ENCODE measurements at regions of chr2 and their contacts with region 1.

Region 1: DNA sequence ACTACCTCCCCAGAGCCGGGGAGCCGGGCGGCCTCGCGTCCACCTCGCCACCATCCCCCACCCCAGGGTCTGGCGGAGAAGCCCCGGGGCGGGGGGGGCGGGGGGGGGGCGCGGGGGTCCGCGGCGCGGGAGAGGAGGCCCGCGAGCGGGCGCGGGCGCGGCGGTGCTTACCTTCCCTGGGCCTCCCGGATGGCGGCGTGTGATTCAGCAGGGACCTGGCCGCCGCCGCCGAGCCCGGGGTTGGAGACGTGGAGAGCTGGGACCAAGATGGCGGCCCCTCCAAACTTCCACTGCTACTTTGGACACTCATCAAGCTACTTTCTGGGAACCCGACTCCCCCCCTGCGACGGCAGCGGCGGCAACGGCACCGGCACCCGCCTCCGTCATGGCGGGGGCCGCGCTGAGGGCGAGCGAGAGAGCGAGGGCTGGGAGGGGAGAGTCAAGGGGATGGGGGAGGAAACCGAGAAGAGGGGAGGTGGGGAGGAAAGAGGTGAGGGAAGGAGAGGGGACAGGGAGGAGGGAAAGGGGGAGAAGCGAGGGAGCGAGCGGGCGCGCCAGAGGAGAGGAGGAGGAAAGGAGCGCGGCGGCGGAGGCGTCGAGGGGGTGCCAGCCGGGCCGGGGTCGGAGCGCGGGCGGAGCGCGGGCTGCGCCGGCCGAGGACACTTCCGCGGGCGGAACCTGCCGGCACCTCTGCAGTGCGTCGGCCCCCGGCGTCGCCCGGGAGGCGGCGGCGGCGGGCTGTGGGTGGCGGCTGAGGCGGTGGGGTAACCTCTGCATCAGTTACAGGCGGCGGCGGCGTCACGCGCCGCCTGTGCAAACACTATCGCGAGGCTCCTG is at the start of gene TLK1:
- DNase-seq: peak; percentile 91
- ATAC-seq: peak; percentile 72
- H3K4me3 ChIP-seq: peak within 1 kb of the TSS; percentile 80 to 91 (median 84)
- H3K4me3 Mint-ChIP-seq: peak within 1 kb of the TSS; percentile 98
- H3K27ac ChIP-seq: peak within 1 kb of the TSS; percentile 81 to 95
- H3K27ac Mint-ChIP-seq: peak within 1 kb of the TSS; percentile 95
- H3K4me1 ChIP-seq: peaks cover 35 to 44% of the 10 kb centered on the region in 2 donors
- H3K4me1 Mint-ChIP-seq: peaks cover 52% of the 10 kb centered on the region
- H3K27me3 ChIP-seq: no peaks in the 10 kb centered on the region
- H3K27me3 Mint-ChIP-seq: no peaks in the 10 kb centered on the region
- CTCF ChIP-seq: no peak
- total RNA-seq, gene TLK1: 178 and 186 TPM in 2 replicates

Region 2: GRCh38 chr2:170928824-170929685 is 231.3 kb before region 1 on chr2 and contains the start of gene GORASP2:
- CTCF ChIA-PET with region 1: interaction called, 7 read pairs
- POLR2A ChIA-PET with region 1: no interaction called
- intact Hi-C with region 1: loop called (anchors 1 kb)
- DNase-seq: peak; percentile 99
- ATAC-seq: peak; percentile 91
- H3K4me3 ChIP-seq: peak within 1 kb of the TSS; percentile 73 to 95 (median 89)
- H3K4me3 Mint-ChIP-seq: peak within 1 kb of the TSS; percentile 92
- H3K27ac ChIP-seq: peak within 1 kb of the TSS; percentile 75 to 90
- H3K27ac Mint-ChIP-seq: peak within 1 kb of the TSS; percentile 96
- H3K4me1 ChIP-seq: peaks cover 20 to 22% of the 10 kb centered on the region in 2 donors
- H3K4me1 Mint-ChIP-seq: peaks cover 34% of the 10 kb centered on the region
- H3K27me3 ChIP-seq: no peaks in the 10 kb centered on the region
- H3K27me3 Mint-ChIP-seq: no peaks in the 10 kb centered on the region
- CTCF ChIP-seq: peak; percentile 99
- total RNA-seq, gene GORASP2: 48.8 and 50.5 TPM in 2 replicates

Region 3: DNA sequence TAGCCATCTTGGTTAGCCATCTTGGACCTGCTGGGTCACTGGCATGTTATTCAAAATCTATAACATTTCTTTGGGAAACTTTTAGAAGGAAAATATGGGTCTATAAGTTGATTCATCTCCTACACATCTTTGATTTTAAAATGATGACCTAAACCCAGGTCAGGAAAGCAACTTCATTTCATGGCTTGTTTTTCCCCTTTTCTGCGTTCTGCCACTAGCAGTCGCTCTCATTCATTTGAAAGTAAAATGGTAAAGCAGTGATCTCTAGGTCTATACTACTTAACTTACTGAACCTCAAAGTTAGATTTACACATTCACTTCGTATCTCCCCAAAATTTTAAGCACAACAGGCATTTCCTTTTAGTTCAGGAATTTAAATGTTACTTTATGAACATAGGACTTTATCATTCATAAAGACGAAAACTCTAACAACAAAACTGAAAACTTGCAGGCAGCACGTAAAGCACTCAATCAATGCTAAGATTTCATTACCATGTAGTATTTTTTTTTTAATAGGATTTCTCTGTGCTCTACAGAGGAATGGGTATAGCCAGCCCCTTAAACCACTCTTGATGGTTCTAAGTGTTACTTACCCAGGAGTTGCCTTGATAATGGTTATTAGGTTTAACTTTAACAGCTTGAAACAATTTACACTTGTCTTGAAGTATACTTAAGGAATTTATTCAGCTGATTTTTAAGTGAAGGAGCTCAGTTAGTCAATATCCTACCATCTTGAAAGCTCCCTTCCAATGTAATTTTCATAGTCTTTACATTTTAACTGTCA is 168.7 kb before region 1 on chr2:
- CTCF ChIA-PET with region 1: no interaction called
- POLR2A ChIA-PET with region 1: no interaction called
- intact Hi-C with region 1: no loop called
- DNase-seq: no peak
- ATAC-seq: no peak
- H3K4me3 ChIP-seq: no peak overlapping the region
- H3K4me3 Mint-ChIP-seq: no peak overlapping the region
- H3K27ac ChIP-seq: no peak overlapping the region
- H3K27ac Mint-ChIP-seq: no peak overlapping the region
- H3K4me1 ChIP-seq: no peaks in the 10 kb centered on the region
- H3K4me1 Mint-ChIP-seq: no peaks in the 10 kb centered on the region
- H3K27me3 ChIP-seq: no peaks in the 10 kb centered on the region
- H3K27me3 Mint-ChIP-seq: no peaks in the 10 kb centered on the region
- CTCF ChIP-seq: no peak

Region 4: DNA sequence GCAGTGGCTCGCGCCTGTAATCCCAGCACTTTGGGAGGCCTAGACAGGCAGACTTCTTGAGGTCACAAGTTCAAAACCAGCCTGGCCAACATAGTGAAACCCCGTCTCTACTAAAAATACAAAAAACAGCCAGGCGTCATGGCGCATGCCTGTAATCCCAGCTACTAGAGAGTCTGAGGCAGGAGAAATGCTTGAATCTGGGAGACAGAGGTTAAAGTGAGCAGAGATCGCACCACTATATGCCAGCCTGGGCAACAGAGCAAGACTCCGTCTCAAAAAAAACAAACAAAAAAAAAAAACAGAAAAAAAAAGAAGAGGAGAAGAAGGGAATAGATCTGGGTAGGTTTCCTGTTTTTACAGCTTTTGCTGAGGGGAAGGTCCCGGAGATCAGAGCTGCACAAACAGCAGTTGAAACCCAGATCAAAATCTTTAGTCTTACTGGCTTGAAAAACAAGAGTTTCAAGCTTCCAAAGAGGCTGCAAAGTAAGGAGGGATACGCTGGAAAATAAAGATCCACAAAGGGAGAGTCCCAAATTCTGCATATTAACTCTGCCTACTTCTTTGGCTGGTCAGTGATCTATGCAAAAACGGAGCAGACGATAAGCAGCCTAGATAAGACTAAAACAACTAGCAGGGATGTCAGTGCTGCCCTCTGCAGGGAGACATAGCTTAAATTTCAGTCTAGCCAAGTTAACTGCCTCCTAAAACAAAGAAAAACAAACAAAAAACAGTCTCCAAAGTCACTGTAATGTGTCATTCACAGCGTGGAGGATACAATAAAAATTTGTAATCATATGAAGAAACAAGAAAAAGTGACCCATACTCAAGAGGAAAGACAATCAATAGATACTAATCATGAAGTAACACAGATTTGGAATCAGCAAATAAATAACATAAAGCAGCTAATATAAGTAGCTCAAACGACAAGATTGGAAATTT is 73.7 kb before region 1 on chr2:
- CTCF ChIA-PET with region 1: interaction called, 10 read pairs
- POLR2A ChIA-PET with region 1: no interaction called
- intact Hi-C with region 1: loop called (anchors 5 kb)
- DNase-seq: peak; percentile 57
- ATAC-seq: peak; percentile 63
- H3K4me3 ChIP-seq: no peak overlapping the region
- H3K4me3 Mint-ChIP-seq: no peak overlapping the region
- H3K27ac ChIP-seq: peak overlapping the region in 1 of 2 donors; percentile 1
- H3K27ac Mint-ChIP-seq: peak overlapping the region; percentile 17
- H3K4me1 ChIP-seq: peaks cover 3% of the 10 kb centered on the region in 2 donors
- H3K4me1 Mint-ChIP-seq: peaks cover 43% of the 10 kb centered on the region
- H3K27me3 ChIP-seq: no peaks in the 10 kb centered on the region
- H3K27me3 Mint-ChIP-seq: no peaks in the 10 kb centered on the region
- CTCF ChIP-seq: peak; percentile 66

Region 5: DNA sequence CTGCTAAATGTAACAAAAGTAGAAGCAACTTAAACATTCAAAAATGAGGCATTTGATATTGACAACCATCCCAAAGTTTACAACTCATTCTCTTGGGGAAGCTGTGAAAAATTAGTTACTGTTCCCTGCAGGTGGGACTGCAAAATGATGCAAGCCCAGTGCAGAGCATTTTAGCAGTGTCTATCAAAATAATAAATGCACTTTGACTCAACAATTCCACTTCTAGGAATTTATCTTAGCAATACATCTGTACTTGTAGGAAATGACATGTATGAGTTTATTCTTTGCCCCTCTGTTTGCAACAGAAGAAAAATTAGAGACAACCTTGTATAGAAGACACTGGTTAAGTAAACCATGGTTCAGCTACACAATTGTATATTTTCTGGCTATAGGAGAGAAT is 48.3 kb after region 1 on chr2:
- CTCF ChIA-PET with region 1: no interaction called
- POLR2A ChIA-PET with region 1: no interaction called
- intact Hi-C with region 1: loop called (anchors 5 kb)
- DNase-seq: no peak
- ATAC-seq: no peak
- H3K4me3 ChIP-seq: no peak overlapping the region
- H3K4me3 Mint-ChIP-seq: no peak overlapping the region
- H3K27ac ChIP-seq: no peak overlapping the region
- H3K27ac Mint-ChIP-seq: no peak overlapping the region
- H3K4me1 ChIP-seq: peaks cover 13 to 14% of the 10 kb centered on the region in 2 donors
- H3K4me1 Mint-ChIP-seq: peaks cover 20% of the 10 kb centered on the region
- H3K27me3 ChIP-seq: no peaks in the 10 kb centered on the region
- H3K27me3 Mint-ChIP-seq: no peaks in the 10 kb centered on the region
- CTCF ChIP-seq: no peak

Region 6: GRCh38 chr2:171342067-171342413 is 181.7 kb after region 1 on chr2:
- CTCF ChIA-PET with region 1: interaction called, 5 read pairs
- POLR2A ChIA-PET with region 1: interaction called, 14 read pairs
- intact Hi-C with region 1: no loop called
- DNase-seq: no peak
- ATAC-seq: no peak
- H3K4me3 ChIP-seq: no peak overlapping the region
- H3K4me3 Mint-ChIP-seq: no peak overlapping the region
- H3K27ac ChIP-seq: peak overlapping the region in 1 of 2 donors; percentile 60
- H3K27ac Mint-ChIP-seq: peak overlapping the region; percentile 32
- H3K4me1 ChIP-seq: peaks cover 7 to 20% of the 10 kb centered on the region in 2 donors
- H3K4me1 Mint-ChIP-seq: peaks cover 31% of the 10 kb centered on the region
- H3K27me3 ChIP-seq: no peaks in the 10 kb centered on the region
- H3K27me3 Mint-ChIP-seq: no peaks in the 10 kb centered on the region
- CTCF ChIP-seq: no peak

Region 7: DNA sequence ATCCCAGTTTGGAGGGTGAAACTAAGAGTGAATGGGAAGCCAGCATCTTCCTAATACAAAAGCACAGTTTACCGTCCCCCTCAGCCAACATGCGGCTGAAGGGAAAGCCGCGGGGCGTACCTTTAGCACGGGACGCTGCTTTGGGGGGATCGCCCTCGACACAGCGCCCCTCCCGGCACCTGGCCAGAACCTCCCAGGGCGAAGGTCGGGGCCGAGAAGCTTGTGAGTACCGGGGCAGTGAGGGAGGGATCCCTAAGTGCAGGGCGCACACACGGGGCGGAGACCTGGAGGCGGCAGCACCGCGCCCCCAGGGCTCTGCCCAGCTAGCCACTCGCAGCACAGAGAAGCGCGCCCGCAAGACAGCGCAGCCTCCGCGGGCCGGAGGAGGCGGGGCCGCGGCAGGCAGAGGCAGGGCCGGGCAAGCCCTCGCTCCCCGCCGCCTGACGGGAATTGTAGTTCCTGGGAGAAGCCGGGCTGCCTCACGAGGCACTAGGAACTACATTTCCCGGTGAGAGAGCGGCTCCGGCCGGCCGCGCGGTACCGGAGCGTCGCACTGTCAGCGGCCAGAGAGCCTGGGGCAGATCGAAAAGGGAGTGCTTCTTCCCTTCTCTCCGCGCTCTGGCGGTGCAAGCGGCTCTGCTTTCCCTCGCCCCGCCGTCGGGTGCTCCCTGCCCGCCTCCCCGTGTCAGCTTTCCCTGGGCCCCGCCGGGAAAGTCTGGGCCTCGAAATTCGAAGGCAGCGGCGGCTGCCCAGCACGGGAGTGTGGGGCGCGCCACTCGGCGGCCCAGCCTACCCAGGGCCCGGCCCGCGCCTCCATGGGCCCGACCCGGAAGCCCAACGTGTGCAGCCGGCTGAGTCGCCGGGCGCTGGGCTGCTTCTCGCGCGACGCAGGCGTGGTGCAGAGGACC is 273.7 kb after region 1 on chr2 and contains the starts of genes DCAF17 and METTL8:
- CTCF ChIA-PET with region 1: interaction called, 4 read pairs
- POLR2A ChIA-PET with region 1: interaction called, 3 read pairs
- intact Hi-C with region 1: loop called (anchors 1 kb)
- DNase-seq: peak; percentile 96
- ATAC-seq: peak; percentile 89
- H3K4me3 ChIP-seq: peak within 1 kb of the TSS; percentile 67 to 87 (median 80)
- H3K4me3 Mint-ChIP-seq: peak within 1 kb of the TSS; percentile 91
- H3K27ac ChIP-seq: peak within 1 kb of the TSS; percentile 84 to 85
- H3K27ac Mint-ChIP-seq: peak within 1 kb of the TSS; percentile 96
- H3K4me1 ChIP-seq: peaks cover 7 to 10% of the 10 kb centered on the region in 2 donors
- H3K4me1 Mint-ChIP-seq: peaks cover 24% of the 10 kb centered on the region
- H3K27me3 ChIP-seq: no peaks in the 10 kb centered on the region
- H3K27me3 Mint-ChIP-seq: no peaks in the 10 kb centered on the region
- CTCF ChIP-seq: peak; percentile 61
- total RNA-seq, gene DCAF17: 27.9 and 29.4 TPM in 2 replicates
- total RNA-seq, gene METTL8: 57.8 and 58.6 TPM in 2 replicates

Region 8: GRCh38 chr2:171703574-171704347 is 543.4 kb after region 1 on chr2:
- CTCF ChIA-PET with region 1: no interaction called
- POLR2A ChIA-PET with region 1: no interaction called
- intact Hi-C with region 1: no loop called
- DNase-seq: peak; percentile 52
- ATAC-seq: no peak
- H3K4me3 ChIP-seq: no peak overlapping the region
- H3K4me3 Mint-ChIP-seq: no peak overlapping the region
- H3K27ac ChIP-seq: no peak overlapping the region
- H3K27ac Mint-ChIP-seq: peak overlapping the region; percentile 81
- H3K4me1 ChIP-seq: peaks cover 7 to 8% of the 10 kb centered on the region in 2 donors
- H3K4me1 Mint-ChIP-seq: peaks cover 10% of the 10 kb centered on the region
- H3K27me3 ChIP-seq: no peaks in the 10 kb centered on the region
- H3K27me3 Mint-ChIP-seq: no peaks in the 10 kb centered on the region
- CTCF ChIP-seq: peak; percentile 71